ENCODE measurements at regions of chr3 and their contacts with region 1.

Region 1: DNA sequence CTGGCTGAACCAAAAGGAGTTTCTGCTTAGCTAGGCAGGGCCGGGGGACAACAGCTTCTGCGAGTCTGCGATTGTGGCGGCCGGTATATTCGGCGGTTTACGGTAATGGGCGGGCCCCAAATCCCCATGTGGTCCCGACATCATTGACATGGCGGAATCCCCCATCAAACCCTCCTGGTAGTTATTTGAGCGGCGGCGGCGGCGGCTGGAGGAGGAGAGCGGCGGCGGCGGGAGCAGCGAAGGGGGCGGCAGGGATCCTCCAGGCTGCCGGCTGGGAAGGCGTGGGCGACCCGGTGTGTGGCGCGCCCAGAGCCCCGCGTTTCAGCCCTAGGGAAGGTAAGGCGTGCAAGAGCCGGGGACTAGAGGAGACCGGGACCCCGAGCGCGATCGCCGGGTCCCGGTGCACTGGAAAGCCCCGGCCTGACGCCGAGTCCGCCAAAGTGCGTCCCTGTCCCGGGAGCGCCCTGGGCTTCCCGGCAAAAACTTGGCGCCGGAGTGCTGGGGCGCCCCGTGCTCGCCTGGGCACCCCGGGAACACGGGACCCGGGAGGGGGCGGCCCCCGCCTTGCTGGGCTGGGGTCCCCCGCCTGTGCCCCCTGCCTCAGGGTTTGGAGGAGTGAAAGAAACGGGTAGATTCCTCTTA is at the start of gene FNDC3B:
- DNase-seq: peak; percentile 90
- H3K4me3 ChIP-seq: peak within 1 kb of the TSS; percentile 79
- H3K27ac ChIP-seq: peak within 1 kb of the TSS; percentile 97
- H3K27me3 ChIP-seq: no peaks in the 10 kb centered on the region
- CTCF ChIP-seq: no peak
- polyA plus RNA-seq, gene FNDC3B: 39.5 and 59.0 TPM in 2 replicates

Region 2: DNA sequence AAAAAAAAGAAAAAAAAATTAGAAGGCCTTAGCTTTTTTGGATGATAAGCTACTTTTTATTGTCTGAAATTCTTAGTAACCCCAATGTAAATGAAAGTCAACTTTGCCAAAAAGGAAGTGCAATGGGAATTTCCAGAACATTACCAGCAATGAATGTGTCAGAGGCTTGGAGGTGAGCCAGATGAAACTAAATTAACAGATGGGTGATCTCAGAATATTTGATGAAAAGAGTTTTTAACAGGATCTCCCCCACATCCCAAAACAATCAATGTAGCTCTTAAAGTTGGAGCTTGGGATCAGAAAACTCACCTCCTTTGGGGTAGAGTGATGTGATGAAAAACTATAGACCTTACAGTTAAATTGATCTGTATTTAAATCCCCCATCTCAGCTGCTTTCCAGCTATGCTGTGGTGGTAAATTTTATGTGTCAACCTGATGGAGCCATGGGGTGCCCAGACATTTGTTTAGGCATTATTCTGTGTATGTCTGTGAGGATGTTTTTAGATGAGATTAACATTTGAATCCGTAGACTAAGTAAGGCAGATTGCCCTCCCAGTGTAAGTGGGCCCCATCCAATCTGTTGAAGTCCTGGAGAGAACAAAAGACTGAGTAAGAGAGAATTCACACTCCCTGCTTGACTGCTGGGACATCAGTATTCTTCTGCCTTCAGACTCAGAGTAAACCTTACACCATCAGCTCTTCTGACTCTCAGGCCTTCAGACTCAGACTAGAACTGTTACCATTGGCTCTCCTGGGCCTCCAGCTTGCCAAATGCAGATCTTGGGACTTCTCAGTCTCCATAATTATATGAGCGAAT is 568.0 kb after region 1 on chr3:
- CTCF ChIA-PET with region 1: no interaction called
- POLR2A ChIA-PET with region 1: interaction called, 18 read pairs
- DNase-seq: peak; percentile 61
- H3K4me3 ChIP-seq: no peak overlapping the region
- H3K27ac ChIP-seq: peak overlapping the region; percentile 86
- H3K27me3 ChIP-seq: no peaks in the 10 kb centered on the region
- CTCF ChIP-seq: no peak

Measured in AG04450 (cell line).